Calu3 (cell line): ENCODE measurements at regions of chr7 and their contacts with region 1.

Region 1: GRCh38 chr7:40717242-40717641 is 582.4 kb downstream of the SUGCT start:
- DNase-seq: peak; percentile 95
- H3K4me3 Mint-ChIP-seq: peak overlapping the region; percentile 57
- H3K27ac Mint-ChIP-seq: peak overlapping the region; percentile 40
- H3K4me1 Mint-ChIP-seq: peaks cover 7% of the 10 kb centered on the region
- H3K27me3 Mint-ChIP-seq: no peaks in the 10 kb centered on the region
- CTCF ChIP-seq: no peak

Region 2: DNA sequence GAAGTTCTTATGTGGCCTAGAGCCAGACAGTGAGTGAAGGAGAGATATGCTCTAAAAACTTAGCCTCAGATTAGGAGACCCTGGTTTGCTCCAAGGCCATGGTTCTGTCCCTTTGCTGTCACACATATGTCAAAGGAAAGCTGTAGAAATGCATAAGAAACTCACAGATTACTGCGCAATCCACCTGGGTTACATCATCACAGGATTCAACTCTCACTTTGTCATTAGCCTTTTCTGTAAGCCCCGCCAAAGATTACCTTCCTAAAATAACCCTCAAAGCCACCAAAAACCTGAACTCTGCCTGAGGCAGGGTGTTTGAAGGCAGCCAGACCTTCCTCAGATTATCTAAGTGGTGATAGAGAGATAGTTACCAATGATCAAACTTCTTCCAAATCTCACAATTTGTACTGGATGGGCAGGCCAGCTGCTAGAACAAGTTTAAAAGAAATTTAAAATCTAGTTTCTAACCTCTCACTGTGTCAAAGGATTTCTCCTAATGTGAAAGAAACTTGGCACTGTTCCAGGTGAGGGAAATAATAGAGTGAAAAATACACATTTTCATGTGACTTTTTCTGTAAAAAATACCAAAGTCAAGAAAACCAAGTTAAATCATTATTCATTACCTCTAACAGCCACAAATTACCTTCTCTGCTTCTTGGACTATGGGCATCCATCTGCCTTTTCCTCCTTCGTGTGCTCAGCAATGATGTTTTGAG is 15.2 kb before region 1 on chr7:
- CTCF ChIA-PET with region 1: interaction called, 12 read pairs
- intact Hi-C with region 1: no loop called
- DNase-seq: no peak
- H3K4me3 Mint-ChIP-seq: no peak overlapping the region
- H3K27ac Mint-ChIP-seq: no peak overlapping the region
- H3K4me1 Mint-ChIP-seq: no peaks in the 10 kb centered on the region
- H3K27me3 Mint-ChIP-seq: no peaks in the 10 kb centered on the region
- CTCF ChIP-seq: no peak